H1 (cell line): ENCODE measurements at regions of chr19 and their contacts with region 1.

Region 1: DNA sequence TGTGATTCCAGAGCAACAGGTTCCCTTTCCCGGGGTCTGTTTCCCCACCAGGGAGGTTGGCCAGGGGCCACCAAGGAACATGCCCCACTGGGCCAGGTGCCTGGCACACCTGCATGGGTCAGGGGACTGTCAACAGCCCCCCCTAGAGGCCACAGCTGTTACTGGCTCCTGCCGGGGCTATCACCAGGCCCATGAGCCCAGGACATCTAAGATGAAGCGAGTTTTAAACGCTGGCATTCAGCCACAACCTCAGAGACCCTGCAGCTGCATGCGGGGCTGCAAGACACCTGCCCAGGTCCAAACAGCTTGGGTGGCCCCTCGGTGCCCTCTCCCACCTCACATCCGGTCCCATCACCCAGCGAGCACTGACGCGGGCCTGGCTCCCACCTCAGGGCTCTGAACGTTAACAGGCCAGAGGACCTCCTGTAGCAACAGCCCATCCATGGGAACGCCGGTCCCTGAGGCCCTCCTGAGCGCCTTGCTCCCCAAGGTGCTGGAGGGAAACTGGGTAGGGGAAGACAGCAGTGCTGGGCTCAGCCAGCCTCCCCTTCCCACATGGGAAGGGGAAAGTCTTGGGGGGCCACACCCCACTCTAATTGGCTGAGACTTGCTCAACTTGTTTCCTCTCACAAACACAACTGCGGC is 12.0 kb downstream of the KHSRP start:
- DNase-seq: peak; percentile 57 to 90
- H3K4me3 ChIP-seq: no peak overlapping the region
- H3K27ac ChIP-seq: peak overlapping the region; percentile 37
- H3K4me1 ChIP-seq: peaks cover 0 to 12% (median 6%) of the 10 kb centered on the region in 4 experiments; a peak in 6 of 7 replicates
- H3K27me3 ChIP-seq: no peaks in the 10 kb centered on the region
- CTCF ChIP-seq: peak; percentile 79 to 92 (median 87)
- EP300 ChIP-seq: no peak
- POLR2A ChIP-seq: peak; percentile 38 to 75
- RAD21 ChIP-seq: peak; percentile 71 to 82

Region 2: GRCh38 chr19:6424939-6425731 is 12.6 kb after region 1 on chr19:
- CTCF ChIA-PET with region 1: interaction called, 5 read pairs
- POLR2A ChIA-PET with region 1: interaction called, 26 read pairs
- DNase-seq: peak; percentile 95 to 100
- H3K4me3 ChIP-seq: peak overlapping the region in 1 of 4 experiments; percentile 21; a peak in 2 of 8 replicates
- H3K27ac ChIP-seq: no peak overlapping the region
- H3K4me1 ChIP-seq: peaks cover 0 to 4% (median 0%) of the 10 kb centered on the region in 4 experiments; a peak in 2 of 7 replicates
- H3K27me3 ChIP-seq: peaks cover 0 to 6% (median 0%) of the 10 kb centered on the region in 4 experiments; a peak in 2 of 7 replicates
- CTCF ChIP-seq: no peak
- EP300 ChIP-seq: no peak
- POLR2A ChIP-seq: no peak; a peak in 1 of 3 replicates
- RAD21 ChIP-seq: no peak